ENCODE measurements at regions of chr19 and their contacts with region 1.

Region 1: GRCh38 chr19:2962045-2962561 is 15.3 kb upstream of the TLE6 start:
- DNase-seq: peak; percentile 57
- H3K4me3 Mint-ChIP-seq: no peak overlapping the region
- H3K27ac Mint-ChIP-seq: no peak overlapping the region
- H3K4me1 Mint-ChIP-seq: peaks cover 6% of the 10 kb centered on the region
- H3K27me3 Mint-ChIP-seq: no peaks in the 10 kb centered on the region

Region 2: DNA sequence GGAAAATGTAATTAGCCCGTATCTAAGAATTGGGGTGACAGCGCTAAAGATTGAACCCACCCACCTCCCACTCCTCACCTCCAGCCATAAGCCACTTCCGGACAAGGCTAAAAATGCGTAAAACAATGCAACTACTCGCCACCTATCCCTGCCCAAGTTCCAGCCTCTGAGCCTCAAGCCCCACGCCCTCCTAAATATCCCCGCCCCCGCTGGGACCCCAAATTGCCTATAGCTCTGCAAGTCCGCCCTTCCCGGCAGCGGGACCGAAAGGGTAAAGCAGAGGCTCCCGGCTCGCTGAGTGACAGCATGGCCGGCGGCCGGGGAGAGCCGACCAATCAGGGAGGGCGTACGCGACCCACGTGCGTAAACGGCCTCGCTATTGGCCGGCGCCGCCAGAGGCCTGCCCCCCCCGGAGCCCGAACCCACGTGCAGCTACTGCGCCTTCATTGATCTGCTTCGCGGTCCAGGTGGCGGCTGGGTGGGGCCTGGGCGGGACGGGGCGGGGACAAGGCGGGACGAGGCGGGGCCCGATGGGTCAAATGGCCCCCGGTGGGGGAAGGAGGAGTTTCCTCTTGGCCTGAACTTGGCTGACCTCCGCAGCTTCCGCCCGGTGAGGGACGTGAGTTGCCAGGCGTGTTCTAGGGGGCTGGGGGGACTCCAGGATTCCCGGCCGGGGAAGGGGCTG is 15.0 kb after region 1 on chr19 and contains the start of gene TLE6:
- intact Hi-C with region 1: loop called (anchors 2 kb)
- DNase-seq: peak; percentile 89
- H3K4me3 Mint-ChIP-seq: peak within 1 kb of the TSS; percentile 92
- H3K27ac Mint-ChIP-seq: peak within 1 kb of the TSS; percentile 86
- H3K4me1 Mint-ChIP-seq: peaks cover 18% of the 10 kb centered on the region
- H3K27me3 Mint-ChIP-seq: peaks cover 37% of the 10 kb centered on the region
- total RNA-seq, gene TLE6: 0.57 and 0.83 TPM in 2 replicates

Region 3: GRCh38 chr19:3024870-3025550 is 62.9 kb after region 1 on chr19:
- intact Hi-C with region 1: no loop called
- DNase-seq: no peak
- H3K4me3 Mint-ChIP-seq: no peak overlapping the region
- H3K27ac Mint-ChIP-seq: no peak overlapping the region
- H3K4me1 Mint-ChIP-seq: peaks cover 19% of the 10 kb centered on the region
- H3K27me3 Mint-ChIP-seq: peaks cover 24% of the 10 kb centered on the region

Region 4: GRCh38 chr19:3047425-3048189 is 85.5 kb after region 1 on chr19:
- intact Hi-C with region 1: no loop called
- DNase-seq: peak; percentile 41
- H3K4me3 Mint-ChIP-seq: peak overlapping the region; percentile 83
- H3K27ac Mint-ChIP-seq: peak overlapping the region; percentile 69
- H3K4me1 Mint-ChIP-seq: peaks cover 8% of the 10 kb centered on the region
- H3K27me3 Mint-ChIP-seq: peaks cover 14% of the 10 kb centered on the region

Region 5: DNA sequence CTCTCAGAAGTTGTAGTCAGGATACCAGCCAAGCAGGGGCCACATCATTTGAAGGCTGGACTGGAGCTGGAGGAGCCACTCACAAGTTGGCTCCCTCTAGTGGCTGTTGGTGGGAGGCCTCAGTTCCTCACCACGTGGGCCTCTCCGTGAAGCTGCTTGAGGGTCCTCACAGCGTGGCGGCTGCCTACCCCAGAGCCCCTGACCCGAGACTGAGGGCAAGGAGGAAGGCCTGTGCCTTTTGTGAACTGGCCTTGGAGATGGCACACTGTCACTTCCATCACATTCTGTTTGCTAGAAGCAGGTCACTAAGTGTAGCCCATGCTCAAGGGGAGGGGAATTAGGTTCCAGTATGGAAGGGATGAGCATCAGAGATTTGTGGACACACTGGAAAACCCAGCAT is 146.7 kb after region 1 on chr19:
- intact Hi-C with region 1: loop called (anchors 1 kb)
- DNase-seq: peak; percentile 45
- H3K4me3 Mint-ChIP-seq: no peak overlapping the region
- H3K27ac Mint-ChIP-seq: peak overlapping the region; percentile 49
- H3K4me1 Mint-ChIP-seq: peaks cover 5% of the 10 kb centered on the region
- H3K27me3 Mint-ChIP-seq: peaks cover 3% of the 10 kb centered on the region

Region 6: GRCh38 chr19:3210347-3211017 is 248.4 kb after region 1 on chr19:
- intact Hi-C with region 1: loop called (anchors 1 kb)
- DNase-seq: peak; percentile 54
- H3K4me3 Mint-ChIP-seq: no peak overlapping the region
- H3K27ac Mint-ChIP-seq: peak overlapping the region; percentile 23
- H3K4me1 Mint-ChIP-seq: no peaks in the 10 kb centered on the region
- H3K27me3 Mint-ChIP-seq: no peaks in the 10 kb centered on the region